Naive thymus-derived CD4-positive, alpha-beta T cell (primary cell): ENCODE measurements at regions of chr7 and their contacts with region 1.

Region 1: DNA sequence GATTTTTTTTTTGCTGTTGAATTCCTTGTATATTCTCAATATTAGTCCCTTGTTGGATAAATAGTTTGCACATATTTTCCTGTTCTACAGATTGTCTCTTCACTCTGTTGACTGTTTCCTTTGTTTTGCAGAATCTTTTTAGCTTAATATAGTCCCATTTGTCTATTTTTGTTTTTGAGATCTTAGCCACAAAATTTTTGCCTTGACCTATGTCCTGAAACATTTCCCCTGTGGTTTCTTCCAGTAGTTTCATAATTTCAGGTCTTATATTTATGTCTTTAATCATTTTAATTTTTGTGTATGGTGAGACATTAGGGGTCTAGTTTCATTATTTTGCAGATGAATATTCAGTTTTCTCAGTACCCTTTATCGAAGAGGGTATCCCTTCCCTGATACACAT is 92.7 kb downstream of the LANCL2 start:
- DNase-seq: no peak
- ATAC-seq: no peak
- H3K4me3 ChIP-seq: no peak overlapping the region
- H3K4me3 Mint-ChIP-seq: no peak overlapping the region
- H3K27ac ChIP-seq: no peak overlapping the region
- H3K27ac Mint-ChIP-seq: peak overlapping the region in 2 of 9 donors; percentile 11 to 32
- H3K4me1 ChIP-seq: peaks cover 0 to 8% of the 10 kb centered on the region in 2 donors
- H3K4me1 Mint-ChIP-seq: peaks cover 10 to 61% (median 41%) of the 10 kb centered on the region in 7 donors
- H3K27me3 ChIP-seq: no peaks in the 10 kb centered on the region
- H3K27me3 Mint-ChIP-seq: no peaks in the 10 kb centered on the region

Region 2: DNA sequence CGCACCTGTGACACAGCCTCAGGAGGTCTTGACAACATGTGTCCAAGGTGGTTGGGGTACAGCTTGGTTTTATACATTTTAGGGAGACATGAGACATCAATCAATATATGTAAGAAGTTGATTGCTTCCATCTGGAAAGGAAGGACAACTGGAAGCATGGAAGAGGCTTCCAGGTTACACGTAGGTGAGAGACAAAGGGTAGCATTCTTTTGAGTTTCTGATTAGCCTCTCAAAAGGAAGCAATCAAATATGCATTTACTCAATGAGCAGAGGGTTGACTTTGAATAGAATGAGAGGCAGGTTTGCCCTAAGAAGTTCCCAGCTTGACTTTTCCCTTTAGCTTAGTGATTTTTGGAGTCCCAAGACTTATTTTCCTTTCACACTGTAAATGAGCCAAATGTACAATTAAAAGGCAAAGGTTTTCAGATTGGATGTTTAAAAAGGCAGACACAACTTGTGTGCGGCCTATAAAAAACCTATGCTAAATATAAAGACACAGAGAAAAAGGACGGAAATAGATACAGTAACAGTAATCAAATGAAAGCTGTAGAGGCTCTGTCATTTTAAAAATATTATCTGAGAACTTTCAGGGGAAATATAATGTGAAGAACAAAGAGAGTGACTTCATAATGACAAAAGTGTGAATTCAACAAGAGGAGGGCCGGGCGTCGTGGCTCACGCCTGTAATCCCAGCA is 158.4 kb before region 1 on chr7:
- CTCF ChIA-PET with region 1: no interaction called
- POLR2A ChIA-PET with region 1: no interaction called
- intact Hi-C with region 1: no loop called
- DNase-seq: no peak
- ATAC-seq: no peak
- H3K4me3 ChIP-seq: no peak overlapping the region
- H3K4me3 Mint-ChIP-seq: no peak overlapping the region
- H3K27ac ChIP-seq: no peak overlapping the region
- H3K27ac Mint-ChIP-seq: no peak overlapping the region
- H3K4me1 ChIP-seq: no peaks in the 10 kb centered on the region
- H3K4me1 Mint-ChIP-seq: no peaks in the 10 kb centered on the region
- H3K27me3 ChIP-seq: no peaks in the 10 kb centered on the region
- H3K27me3 Mint-ChIP-seq: peaks cover 10 to 57% (median 15%) of the 10 kb centered on the region in 5 donors

Region 3: DNA sequence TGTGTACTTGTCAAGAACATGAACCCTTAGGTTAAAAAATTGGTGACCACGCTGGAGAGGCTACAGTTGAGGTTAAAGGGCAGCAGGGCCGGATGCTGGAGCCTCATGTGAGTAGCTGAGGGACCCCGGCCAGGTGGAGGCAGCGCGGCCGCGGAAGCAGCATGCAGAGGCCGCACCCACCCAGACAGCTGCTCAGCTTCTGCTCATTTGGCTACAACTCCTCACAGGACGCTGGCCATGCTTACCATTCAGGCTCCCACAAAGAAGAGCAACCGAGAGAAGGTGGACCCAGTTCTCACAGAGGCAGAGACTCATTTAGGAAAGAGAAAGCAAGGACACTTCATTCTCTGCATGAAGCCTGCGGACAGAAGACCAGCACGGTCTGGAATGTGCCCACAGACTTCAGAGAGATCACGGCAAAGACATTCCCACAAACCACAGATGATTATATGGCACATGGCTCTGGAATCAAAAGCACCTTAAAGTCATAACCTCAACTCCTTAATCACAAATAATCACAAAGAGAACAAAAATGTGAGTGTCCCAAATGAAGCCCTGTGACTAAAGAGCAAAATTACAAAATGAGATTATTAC is 20.1 kb after region 1 on chr7:
- CTCF ChIA-PET with region 1: no interaction called
- POLR2A ChIA-PET with region 1: interaction called, 3 read pairs
- intact Hi-C with region 1: loop called in 1 of 2 experiments (anchors 2 kb)
- DNase-seq: no peak
- ATAC-seq: no peak
- H3K4me3 ChIP-seq: no peak overlapping the region
- H3K4me3 Mint-ChIP-seq: peak overlapping the region in 7 of 10 donors; percentile 0 to 79 (median 66)
- H3K27ac ChIP-seq: peak overlapping the region; percentile 61
- H3K27ac Mint-ChIP-seq: peak overlapping the region; percentile 35 to 95 (median 92)
- H3K4me1 ChIP-seq: peaks cover 37 to 64% of the 10 kb centered on the region in 2 donors
- H3K4me1 Mint-ChIP-seq: peaks cover 48 to 98% (median 86%) of the 10 kb centered on the region in 7 donors
- H3K27me3 ChIP-seq: no peaks in the 10 kb centered on the region
- H3K27me3 Mint-ChIP-seq: no peaks in the 10 kb centered on the region